Right ventricle myocardium superior (tissue), 1 donor: ENCODE measurements at regions of chr18 and their contacts with region 1.

Region 1: DNA sequence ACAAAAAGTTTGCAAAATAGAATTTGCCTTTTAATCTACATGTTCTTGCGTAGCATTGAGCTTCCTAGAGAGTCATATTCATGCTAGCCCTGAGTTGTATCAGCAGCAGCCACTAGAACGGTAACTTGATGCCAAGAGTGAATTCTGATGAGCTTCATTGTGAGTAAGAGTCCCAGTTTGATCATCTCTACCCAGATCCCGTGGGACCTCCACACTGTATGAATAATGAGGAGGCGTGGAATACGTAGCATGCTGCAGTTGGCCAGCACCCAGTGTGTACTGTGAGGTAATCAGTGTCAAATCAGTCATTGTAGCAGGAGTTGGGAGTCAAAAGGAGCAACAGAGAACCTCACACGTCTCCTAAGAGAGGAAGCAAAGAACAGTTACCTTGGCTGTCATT is 197.9 kb downstream of the NEDD4L start:
- DNase-seq: no peak
- ATAC-seq: peak; percentile 62

Region 2: DNA sequence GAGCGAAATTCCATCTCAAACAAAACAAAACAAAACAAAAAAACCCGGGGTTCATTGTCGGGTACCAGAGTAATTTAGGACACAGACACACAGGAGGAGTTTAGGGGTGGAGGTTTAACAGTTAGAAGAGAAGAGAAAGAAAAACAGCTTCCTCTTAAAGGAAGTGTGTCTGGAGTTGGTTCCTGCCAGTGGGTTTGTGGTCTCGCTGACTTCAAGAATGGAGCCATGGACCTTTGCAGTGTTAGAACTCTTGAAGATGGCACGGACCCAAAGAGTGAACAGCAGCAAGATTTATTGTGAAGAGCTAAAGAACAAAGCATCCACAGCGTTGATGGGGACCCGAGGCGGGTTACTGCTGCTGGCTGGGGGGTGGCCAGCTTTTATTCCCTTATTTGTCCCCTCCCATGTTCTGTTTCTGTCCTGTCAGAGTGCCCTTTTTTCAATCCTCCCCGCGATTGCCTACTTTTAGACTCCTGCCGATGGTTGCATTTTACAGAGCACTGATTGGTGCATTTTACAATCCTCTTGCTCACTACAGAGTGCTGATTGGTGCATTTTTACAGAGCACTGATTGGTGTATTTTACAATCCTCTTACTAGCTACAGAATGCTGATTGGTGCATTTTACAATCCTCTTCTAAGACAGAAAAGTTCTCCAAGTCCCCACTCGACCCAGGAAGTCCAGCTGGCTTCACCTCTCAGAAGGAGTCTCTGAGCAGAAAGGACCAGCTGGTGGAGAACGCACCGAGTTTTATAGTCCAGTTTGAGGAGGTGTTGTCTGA is 410.1 kb before region 1 on chr18:
- intact Hi-C with region 1: no loop called
- DNase-seq: no peak
- ATAC-seq: no peak

Region 3: DNA sequence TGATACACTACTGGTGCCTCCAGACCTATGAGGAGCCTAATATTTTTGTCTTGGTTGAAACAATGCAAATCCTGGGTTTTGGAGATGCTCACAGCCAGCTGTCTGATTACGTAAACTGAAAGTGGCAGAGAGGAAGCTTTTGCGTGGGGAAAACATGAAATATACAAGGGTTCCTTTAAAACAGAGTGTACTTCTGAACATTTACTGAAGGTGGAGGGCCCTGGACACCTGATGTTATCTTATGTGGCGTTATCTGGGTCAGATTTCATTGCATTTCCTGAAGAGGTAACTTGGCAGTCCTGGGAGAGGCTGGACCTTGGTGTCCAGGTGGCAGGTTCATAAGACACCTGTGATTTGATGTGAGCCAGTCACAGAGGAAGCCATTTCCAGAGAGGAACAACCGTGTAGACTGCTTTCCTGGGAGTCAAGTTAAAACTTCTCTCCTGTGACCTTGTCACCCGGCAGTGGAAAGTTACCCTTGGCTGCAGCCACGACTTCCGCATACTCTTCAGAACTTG is 92.9 kb before region 1 on chr18:
- intact Hi-C with region 1: no loop called
- DNase-seq: no peak
- ATAC-seq: no peak

Region 4: DNA sequence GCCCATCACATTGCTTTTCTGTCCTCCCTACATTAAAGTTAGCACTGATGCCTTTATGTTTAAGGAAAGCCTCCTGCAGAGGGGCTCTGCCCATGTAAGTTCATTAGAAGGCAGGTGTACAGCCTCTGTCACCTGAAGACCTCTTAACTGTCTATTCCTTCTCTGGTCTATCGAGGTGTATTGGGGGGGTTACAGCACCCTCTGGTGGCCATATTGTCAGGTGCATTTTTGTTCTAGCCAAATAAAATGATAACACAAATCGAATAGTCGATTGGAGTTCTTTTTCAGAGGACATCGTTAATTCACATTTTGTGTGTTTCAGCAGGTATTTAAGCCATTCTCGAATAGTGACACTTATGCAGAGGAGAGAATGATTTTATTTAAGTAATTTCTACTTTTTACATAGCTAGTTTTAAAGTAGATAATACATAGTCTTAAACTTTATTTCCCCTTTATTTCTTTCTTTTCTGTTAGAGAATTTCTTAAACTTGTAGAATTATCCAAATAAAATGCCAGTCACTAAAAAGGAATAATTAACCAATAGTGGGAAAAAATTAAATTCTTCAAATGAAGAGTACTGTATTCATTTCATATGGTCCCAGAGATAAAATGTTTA is 61.0 kb before region 1 on chr18:
- intact Hi-C with region 1: loop called (anchors 10 kb)
- DNase-seq: no peak
- ATAC-seq: peak; percentile 56